Activated naive CD8-positive, alpha-beta T cell treated with anti-CD3 and anti-CD28 coated beads, Interleukin-2, amount 10 ng/mL, durations not matched to agents 7 days and 5 days (primary cell): ENCODE measurements at regions of chr19 and their contacts with region 1.

Region 1: GRCh38 chr19:13748169-13748828 is 16.0 kb upstream of the MRI1 start:
- DNase-seq: no peak
- ATAC-seq: peak; percentile 4
- H3K4me3 Mint-ChIP-seq: peak overlapping the region; percentile 96
- H3K27ac Mint-ChIP-seq: peak overlapping the region; percentile 91
- H3K4me1 Mint-ChIP-seq: peaks cover 21% of the 10 kb centered on the region
- H3K27me3 Mint-ChIP-seq: no peaks in the 10 kb centered on the region

Region 2: DNA sequence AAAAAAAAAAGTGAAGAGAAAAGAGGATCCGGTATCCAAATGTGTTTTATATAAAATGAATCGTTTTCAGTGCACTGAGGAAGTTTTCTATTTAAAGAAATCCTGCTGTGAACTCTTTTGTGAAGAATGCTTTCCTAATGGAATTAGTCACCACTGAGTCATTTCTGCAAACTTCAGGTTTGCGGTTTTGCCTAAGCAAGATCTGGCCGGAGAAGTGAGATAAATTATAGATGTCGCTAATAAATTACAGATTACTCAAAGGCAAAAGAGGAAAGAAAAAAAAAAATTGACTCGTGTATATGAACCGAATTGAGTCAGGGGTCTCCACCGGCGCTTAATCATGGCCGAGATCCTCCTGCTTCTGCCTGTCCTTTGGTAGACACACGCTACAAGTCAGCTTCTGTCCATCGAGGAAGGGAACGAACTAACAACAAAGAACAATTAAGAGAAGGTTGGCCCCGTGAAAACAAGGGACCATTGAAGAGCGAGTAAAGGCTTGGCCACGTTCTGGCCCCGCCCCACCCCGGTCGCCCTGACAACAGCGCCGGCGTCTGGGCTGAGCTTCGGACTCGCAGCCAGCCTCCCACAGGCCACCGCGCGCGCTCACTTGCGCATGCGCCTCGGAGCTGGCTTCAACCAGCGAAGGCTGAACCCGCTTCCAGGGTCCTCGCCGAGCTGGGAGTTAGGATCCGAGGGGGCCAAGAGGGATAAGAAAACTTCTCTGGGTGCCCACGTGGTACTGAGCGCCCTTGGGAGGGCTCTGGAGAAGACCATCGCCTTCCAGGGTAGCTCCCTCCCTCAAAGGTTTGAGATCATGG is 16.9 kb before region 1 on chr19:
- POLR2A ChIA-PET with region 1: interaction called, 21 read pairs
- DNase-seq: peak; percentile 97
- ATAC-seq: peak; percentile 100
- H3K4me3 Mint-ChIP-seq: peak overlapping the region; percentile 86
- H3K27ac Mint-ChIP-seq: peak overlapping the region; percentile 91
- H3K4me1 Mint-ChIP-seq: peaks cover 9% of the 10 kb centered on the region
- H3K27me3 Mint-ChIP-seq: no peaks in the 10 kb centered on the region

Region 3: DNA sequence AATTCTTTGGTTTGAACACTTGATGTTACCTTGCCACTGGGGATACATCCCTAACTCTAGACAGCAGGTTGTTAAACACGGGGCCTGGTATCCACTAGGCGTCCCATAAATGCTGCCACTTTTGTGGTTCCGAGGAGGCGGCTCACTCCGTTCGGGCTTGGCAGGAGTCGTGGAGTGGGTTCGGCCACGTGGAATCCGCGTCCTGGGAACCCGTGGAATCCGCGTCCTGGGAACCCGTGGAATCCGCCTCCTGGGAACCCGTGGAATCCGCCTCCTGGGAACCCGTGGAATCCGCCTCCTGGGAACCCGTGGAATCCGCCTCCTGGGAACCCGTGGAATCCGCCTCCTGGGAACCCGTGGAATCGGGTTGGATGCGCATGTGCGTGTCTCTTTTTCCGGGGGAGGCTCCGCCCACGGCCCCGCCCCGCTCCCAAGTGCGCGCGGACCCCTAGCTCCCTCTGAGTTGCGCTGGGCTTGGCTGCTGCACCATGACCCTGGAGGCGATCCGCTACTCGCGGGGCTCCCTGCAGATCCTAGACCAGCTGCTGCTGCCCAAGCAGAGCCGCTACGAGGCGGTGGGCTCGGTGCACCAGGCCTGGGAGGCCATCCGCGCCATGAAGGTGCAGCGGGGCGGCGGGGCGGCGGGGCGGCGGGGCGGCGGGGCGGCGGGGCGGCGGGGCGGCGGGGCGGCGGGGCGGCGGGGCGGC is 16.0 kb after region 1 on chr19 and contains the start of gene MRI1:
- POLR2A ChIA-PET with region 1: interaction called, 20 read pairs
- DNase-seq: peak; percentile 80
- ATAC-seq: peak; percentile 82
- H3K4me3 Mint-ChIP-seq: peak within 1 kb of the TSS; percentile 91
- H3K27ac Mint-ChIP-seq: peak within 1 kb of the TSS; percentile 85
- H3K4me1 Mint-ChIP-seq: peaks cover 8% of the 10 kb centered on the region
- H3K27me3 Mint-ChIP-seq: no peaks in the 10 kb centered on the region
- total RNA-seq, gene MRI1: 63.5 to 65.3 TPM

Region 4: DNA sequence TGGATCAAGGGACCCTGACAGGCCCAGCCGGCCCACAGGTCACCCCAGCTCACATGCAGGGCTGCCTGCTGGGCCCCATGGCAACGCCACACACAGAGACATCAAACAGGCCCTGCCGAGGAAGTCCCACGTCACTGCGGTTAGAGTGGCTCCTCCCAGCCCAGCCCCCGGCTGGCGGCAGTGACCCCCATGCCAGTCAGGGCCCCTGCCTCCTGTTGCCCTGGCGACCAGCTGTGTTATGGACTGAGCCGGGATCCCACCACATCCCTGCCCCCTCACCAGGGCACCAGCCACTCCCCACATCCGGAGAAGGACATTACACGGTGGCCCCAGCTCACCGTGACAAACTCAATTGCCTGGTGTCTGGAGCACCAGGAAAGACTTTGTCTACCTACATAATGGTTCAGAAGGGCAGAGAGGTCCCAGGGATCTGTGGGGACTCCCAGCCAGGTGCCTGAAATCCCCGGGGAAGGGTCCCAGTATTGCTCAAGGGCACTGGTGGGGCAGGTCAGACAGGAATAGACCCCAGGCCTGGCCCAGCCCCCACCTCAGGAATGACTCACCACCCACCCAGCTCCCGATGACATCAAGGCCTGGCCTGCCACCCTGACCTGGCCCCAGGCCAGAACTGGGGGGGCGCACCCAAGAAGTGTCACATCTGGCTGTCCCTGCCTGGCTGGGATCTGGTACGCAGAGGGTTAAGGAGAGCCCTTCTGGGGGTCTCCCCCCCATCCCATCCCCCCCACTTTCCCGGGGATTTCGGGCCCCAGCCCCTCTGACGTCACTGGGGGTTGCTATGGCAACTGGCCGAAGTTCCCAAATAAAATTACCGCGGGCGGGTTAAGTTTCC is 98.5 kb after region 1 on chr19:
- POLR2A ChIA-PET with region 1: interaction called, 18 read pairs
- DNase-seq: peak; percentile 93
- ATAC-seq: peak; percentile 53
- H3K4me3 Mint-ChIP-seq: peak overlapping the region; percentile 78
- H3K27ac Mint-ChIP-seq: peak overlapping the region; percentile 96
- H3K4me1 Mint-ChIP-seq: peaks cover 35% of the 10 kb centered on the region
- H3K27me3 Mint-ChIP-seq: no peaks in the 10 kb centered on the region